PC-9 (cell line): ENCODE measurements at regions of chr12 and their contacts with region 1.

Region 1: DNA sequence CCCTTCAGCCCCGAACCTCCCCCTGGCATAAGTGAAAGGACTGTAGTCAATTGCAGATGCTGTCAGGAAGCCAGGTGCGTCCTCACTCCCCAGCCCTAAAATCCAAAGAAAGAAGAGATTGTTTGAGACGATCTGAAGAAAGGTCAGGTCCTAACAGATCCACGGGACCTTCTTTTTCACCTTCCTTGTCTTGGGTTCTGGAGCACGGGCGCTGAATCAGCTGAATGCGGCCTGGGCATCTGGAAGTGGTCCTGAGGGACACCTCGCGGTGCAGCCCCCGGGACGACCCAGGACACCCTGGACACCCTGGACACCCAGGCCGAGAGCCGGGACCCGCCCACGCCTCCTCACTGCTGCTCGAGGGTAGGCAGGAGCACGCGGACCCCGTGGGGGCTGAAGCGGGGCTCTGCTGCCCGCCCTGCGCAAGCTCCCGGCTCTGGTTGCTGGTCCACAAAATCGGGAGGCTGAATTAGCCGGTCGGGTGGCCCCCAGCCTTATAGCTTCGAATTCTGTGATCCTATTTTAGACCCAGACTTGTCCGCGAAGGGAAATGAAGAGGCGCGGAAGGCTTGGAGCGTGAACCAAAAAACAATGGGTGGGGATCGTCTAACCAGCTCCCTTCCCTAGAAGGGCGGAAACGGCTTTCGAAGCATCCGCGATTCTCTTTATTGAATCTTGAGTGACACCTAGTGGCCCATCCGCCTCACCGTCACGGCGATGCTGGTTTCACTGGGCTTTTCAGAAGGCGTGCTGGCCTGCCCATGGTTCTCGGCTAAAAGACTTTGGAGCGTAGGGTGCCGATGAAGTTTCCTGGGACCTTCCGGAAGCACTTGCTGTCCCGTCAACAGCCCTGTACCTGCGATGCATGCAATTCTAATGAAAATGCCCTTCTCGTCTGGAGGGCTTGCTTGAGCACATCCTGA is 46.4 kb upstream of the PLXNC1 start:
- DNase-seq: peak; percentile 69 to 75
- H3K4me3 ChIP-seq: peak overlapping the region; percentile 59; the same call in 1 of the 2 replicates
- H3K27ac ChIP-seq: no peak overlapping the region
- H3K4me1 ChIP-seq: peaks cover 41% of the 10 kb centered on the region
- H3K27me3 ChIP-seq: no peaks in the 10 kb centered on the region
- CTCF ChIP-seq: peak; percentile 78

Region 2: GRCh38 chr12:93408813-93409212 is 693.2 kb before region 1 on chr12:
- CTCF ChIA-PET with region 1: no interaction called
- POLR2A ChIA-PET with region 1: no interaction called
- intact Hi-C with region 1: loop called (anchors 2 kb)
- DNase-seq: no peak
- H3K4me3 ChIP-seq: no peak overlapping the region
- H3K27ac ChIP-seq: no peak overlapping the region
- H3K4me1 ChIP-seq: peaks cover 11% of the 10 kb centered on the region; the same call in 1 of the 2 replicates
- H3K27me3 ChIP-seq: no peaks in the 10 kb centered on the region
- CTCF ChIP-seq: no peak

Region 3: DNA sequence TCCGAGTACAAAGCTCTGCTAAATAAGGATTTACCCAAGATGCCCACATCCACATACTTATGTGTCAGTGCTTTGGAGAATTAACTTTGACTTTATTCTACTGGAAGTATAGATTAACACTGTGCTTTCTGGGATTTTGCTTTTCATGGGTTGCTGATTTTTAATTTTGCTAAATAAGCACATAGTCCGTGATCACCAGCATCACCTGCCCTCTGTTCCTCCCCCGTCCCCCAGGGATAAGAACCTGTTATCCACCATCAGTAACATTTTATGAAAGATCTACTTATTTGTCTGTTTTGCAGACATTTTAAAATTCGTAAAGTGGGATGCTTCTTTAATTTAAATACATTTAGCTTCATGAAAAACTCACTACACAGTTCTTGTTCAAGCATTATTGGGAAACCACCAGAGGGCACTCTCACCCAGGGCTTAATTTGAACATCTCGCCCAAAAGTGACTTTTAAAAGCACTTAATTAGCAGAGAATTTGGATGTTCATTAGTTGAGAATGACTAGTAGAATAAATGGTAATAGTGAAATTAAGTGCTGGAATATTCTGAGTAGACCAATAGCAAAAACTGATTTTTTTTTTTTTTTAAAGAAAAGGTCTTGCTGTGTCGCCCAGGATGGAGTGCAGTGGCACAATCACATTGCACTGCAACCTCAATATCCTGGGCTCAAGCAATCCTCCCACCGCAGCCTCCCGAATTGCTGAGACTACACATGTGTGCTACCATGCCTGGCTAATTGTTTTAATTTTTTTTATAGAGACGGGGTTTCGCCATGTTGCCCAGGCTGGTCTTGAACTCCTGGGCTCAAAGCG is 599.0 kb before region 1 on chr12:
- CTCF ChIA-PET with region 1: interaction called, 43 read pairs
- POLR2A ChIA-PET with region 1: no interaction called
- intact Hi-C with region 1: loop called (anchors 1 kb)
- DNase-seq: peak in 1 of 2 experiments; percentile 41
- H3K4me3 ChIP-seq: no peak overlapping the region
- H3K27ac ChIP-seq: no peak overlapping the region
- H3K4me1 ChIP-seq: no peaks in the 10 kb centered on the region
- H3K27me3 ChIP-seq: no peaks in the 10 kb centered on the region
- CTCF ChIP-seq: peak; percentile 92

Region 4: DNA sequence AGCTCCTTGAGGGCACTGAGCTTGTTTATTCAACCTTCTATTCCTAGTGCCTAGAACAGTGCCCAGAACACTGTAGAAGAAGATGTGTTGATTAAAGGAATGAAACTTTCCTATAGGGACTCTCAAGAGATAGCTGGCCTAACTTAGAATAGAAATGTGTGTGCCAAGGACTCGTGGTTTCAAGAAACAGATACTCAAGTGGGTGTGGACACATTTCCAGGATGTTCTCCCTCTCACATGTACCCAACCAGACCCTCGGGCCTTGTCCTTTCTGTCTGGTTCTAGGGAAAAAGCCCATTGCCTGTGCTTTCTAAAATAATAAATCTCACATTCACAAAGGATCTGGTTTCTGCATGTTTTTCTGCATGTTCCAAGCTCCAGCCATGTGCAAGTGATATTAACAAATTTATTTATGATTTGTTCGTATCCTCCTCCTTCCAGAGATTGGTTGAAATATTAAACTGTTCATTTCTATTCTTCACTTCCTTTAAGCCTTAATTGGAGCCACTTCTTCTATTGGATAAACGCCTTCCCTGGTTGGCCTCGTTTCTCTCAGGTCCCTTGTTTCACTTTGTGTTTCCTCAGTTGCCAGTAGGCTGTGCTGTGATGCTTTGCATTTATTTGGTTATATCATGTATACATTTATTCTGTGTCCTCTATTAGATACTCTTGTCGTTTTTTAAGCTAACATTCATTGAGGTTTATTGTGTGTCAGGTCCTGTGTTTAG is 335.0 kb before region 1 on chr12:
- CTCF ChIA-PET with region 1: interaction called, 14 read pairs
- POLR2A ChIA-PET with region 1: no interaction called
- intact Hi-C with region 1: loop called (anchors 1 kb)
- DNase-seq: peak in 1 of 2 experiments; percentile 20
- H3K4me3 ChIP-seq: no peak overlapping the region
- H3K27ac ChIP-seq: no peak overlapping the region
- H3K4me1 ChIP-seq: no peaks in the 10 kb centered on the region
- H3K27me3 ChIP-seq: no peaks in the 10 kb centered on the region
- CTCF ChIP-seq: peak; percentile 55

Region 5: GRCh38 chr12:93879476-93880421 is 222.2 kb before region 1 on chr12:
- CTCF ChIA-PET with region 1: no interaction called
- POLR2A ChIA-PET with region 1: no interaction called
- intact Hi-C with region 1: loop called (anchors 2 kb)
- DNase-seq: no peak
- H3K4me3 ChIP-seq: no peak overlapping the region
- H3K27ac ChIP-seq: no peak overlapping the region
- H3K4me1 ChIP-seq: peaks cover 17% of the 10 kb centered on the region
- H3K27me3 ChIP-seq: no peaks in the 10 kb centered on the region
- CTCF ChIP-seq: no peak

Region 6: GRCh38 chr12:94047741-94048567 is 54.0 kb before region 1 on chr12:
- CTCF ChIA-PET with region 1: no interaction called
- POLR2A ChIA-PET with region 1: no interaction called
- intact Hi-C with region 1: no loop called
- DNase-seq: no peak
- H3K4me3 ChIP-seq: no peak overlapping the region
- H3K27ac ChIP-seq: no peak overlapping the region
- H3K4me1 ChIP-seq: no peaks in the 10 kb centered on the region
- H3K27me3 ChIP-seq: no peaks in the 10 kb centered on the region
- CTCF ChIP-seq: no peak

Region 7: GRCh38 chr12:94532490-94533422 is 430.8 kb after region 1 on chr12:
- CTCF ChIA-PET with region 1: no interaction called
- POLR2A ChIA-PET with region 1: no interaction called
- intact Hi-C with region 1: no loop called
- DNase-seq: peak; percentile 45 to 48
- H3K4me3 ChIP-seq: no peak overlapping the region
- H3K27ac ChIP-seq: no peak overlapping the region
- H3K4me1 ChIP-seq: no peaks in the 10 kb centered on the region
- H3K27me3 ChIP-seq: no peaks in the 10 kb centered on the region
- CTCF ChIP-seq: peak; percentile 83